Activated CD8-positive, alpha-beta T cell treated with anti-CD3 and anti-CD28 coated beads for 36 hours (primary cell): ENCODE measurements at regions of chr7 and their contacts with region 1.

Region 1: DNA sequence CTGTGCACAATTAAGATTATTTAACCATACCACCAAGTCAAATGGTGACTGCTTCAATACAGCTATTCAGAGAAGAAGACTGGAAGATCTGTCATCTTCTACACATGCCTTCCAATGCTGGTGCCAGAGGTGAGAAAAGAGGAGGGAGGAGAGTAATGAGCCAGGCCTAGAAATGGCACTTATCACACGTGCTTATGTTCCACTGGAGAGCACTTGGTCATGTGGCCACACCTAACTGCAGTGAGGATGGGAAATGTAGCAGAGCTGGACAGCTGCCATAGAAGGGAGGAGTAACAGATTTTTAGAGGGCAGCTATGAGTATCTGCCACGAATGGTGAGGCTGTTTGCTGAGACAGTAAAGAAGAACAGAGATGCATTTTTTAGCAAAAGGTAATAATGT is 77.1 kb downstream of the MPLKIP start:
- DNase-seq: no peak
- ATAC-seq: peak; percentile 27
- H3K4me3 Mint-ChIP-seq: no peak overlapping the region
- H3K27ac Mint-ChIP-seq: no peak overlapping the region
- H3K4me1 Mint-ChIP-seq: peaks cover 6% of the 10 kb centered on the region
- H3K27me3 Mint-ChIP-seq: no peaks in the 10 kb centered on the region
- CTCF ChIP-seq: no peak

Region 2: GRCh38 chr7:39894904-39895303 is 162.4 kb before region 1 on chr7:
- CTCF ChIA-PET with region 1: interaction called, 142 read pairs
- POLR2A ChIA-PET with region 1: no interaction called
- intact Hi-C with region 1: loop called (anchors 2 kb)
- DNase-seq: no peak
- ATAC-seq: no peak
- H3K4me3 Mint-ChIP-seq: no peak overlapping the region
- H3K27ac Mint-ChIP-seq: no peak overlapping the region
- H3K4me1 Mint-ChIP-seq: no peaks in the 10 kb centered on the region
- H3K27me3 Mint-ChIP-seq: no peaks in the 10 kb centered on the region
- CTCF ChIP-seq: no peak

Region 3: DNA sequence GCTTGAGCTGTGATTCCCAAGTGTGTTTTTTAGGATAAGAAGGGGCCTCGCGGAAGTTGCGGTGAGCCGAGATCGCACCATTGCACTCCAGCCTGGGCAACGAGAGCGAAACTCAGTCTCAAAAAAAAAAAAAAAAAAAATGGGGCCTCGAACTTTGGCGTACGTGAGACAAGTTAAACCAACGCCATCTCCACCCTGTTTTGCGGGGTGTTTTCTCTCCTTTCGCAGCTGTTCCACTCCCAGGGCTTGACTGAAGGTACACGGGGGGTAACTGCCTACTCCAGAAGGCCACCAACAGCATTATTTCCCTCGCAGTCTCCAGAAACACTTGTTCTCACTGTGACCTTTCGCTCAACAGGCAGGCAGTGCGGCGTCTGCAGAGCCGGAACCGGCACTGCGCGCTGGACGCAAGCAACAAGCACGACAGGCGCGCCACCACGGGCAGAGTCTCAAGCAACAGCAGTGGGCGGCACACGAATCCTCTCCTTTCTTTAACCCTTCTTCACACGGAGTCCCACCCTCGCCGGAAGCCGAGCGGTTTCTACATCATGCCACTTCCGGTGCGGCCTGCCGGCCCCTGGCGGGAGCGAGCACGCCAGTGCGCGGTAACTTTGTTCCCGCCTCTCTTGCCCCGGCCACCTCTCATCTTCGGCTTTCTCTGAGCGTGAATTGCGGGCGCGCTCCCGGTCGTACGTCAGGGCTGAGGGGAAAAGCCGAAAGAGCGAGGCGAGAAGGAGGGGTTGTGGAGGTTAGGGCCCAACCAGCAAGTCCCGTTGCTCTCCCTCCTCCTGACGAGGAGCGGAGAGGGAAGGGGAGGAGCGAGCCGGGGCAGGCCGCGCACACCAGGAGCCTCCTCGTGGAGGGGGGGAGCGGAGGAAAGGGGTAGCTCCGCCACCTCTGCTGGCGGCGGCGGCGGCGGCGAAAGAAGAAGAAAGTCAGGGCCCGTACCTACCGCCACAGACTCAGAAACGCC is 108.0 kb before region 1 on chr7:
- CTCF ChIA-PET with region 1: interaction called, 36 read pairs
- POLR2A ChIA-PET with region 1: interaction called, 3 read pairs
- intact Hi-C with region 1: loop called (anchors 1 kb)
- DNase-seq: peak; percentile 98
- ATAC-seq: peak; percentile 79
- H3K4me3 Mint-ChIP-seq: peak overlapping the region; percentile 90
- H3K27ac Mint-ChIP-seq: peak overlapping the region; percentile 99
- H3K4me1 Mint-ChIP-seq: peaks cover 20% of the 10 kb centered on the region
- H3K27me3 Mint-ChIP-seq: no peaks in the 10 kb centered on the region
- CTCF ChIP-seq: no peak

Region 4: DNA sequence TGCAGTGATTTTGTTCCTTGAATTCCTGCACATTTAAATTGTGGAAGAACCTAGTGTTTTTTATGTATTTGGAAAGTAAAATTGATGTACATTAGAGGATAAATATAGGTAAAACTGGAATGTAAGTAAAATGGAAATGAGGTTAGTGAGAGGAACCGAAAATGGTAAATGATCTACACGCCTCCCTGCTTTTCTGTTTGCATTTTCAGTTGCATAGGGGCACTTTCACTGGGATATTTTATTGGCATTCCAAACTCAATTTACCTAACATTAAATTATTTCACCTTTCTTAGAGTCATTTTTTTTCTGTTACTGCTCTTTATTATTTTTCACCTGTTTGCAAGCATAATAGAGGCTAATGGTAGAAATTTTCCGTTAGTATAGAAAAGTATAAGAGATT is 99.3 kb before region 1 on chr7:
- CTCF ChIA-PET with region 1: interaction called, 36 read pairs
- POLR2A ChIA-PET with region 1: no interaction called
- intact Hi-C with region 1: no loop called
- DNase-seq: no peak
- ATAC-seq: no peak
- H3K4me3 Mint-ChIP-seq: no peak overlapping the region
- H3K27ac Mint-ChIP-seq: no peak overlapping the region
- H3K4me1 Mint-ChIP-seq: peaks cover 73% of the 10 kb centered on the region
- H3K27me3 Mint-ChIP-seq: no peaks in the 10 kb centered on the region
- CTCF ChIP-seq: no peak

Region 5: DNA sequence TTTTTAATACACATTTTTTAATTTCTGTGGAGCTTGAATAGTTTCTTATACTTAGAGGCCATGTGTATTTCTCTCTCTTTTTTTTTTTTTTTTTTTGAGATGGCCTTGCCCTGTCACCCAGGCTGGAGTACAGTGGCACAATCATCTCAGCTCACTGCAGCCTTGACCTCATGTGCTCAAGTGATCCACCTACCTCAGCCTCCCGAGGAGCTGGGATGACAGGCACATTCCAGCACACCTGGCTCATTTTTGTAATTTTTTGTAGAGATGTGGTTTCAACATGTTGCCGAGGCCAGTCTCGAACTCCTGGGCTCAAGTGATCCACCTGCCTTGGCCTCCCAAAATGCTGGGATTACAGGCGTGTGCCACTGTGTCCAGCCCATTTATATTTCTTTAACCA is 42.9 kb before region 1 on chr7:
- CTCF ChIA-PET with region 1: no interaction called
- POLR2A ChIA-PET with region 1: no interaction called
- intact Hi-C with region 1: no loop called
- DNase-seq: no peak
- ATAC-seq: no peak
- H3K4me3 Mint-ChIP-seq: no peak overlapping the region
- H3K27ac Mint-ChIP-seq: no peak overlapping the region
- H3K4me1 Mint-ChIP-seq: peaks cover 26% of the 10 kb centered on the region
- H3K27me3 Mint-ChIP-seq: no peaks in the 10 kb centered on the region
- CTCF ChIP-seq: no peak

Region 6: DNA sequence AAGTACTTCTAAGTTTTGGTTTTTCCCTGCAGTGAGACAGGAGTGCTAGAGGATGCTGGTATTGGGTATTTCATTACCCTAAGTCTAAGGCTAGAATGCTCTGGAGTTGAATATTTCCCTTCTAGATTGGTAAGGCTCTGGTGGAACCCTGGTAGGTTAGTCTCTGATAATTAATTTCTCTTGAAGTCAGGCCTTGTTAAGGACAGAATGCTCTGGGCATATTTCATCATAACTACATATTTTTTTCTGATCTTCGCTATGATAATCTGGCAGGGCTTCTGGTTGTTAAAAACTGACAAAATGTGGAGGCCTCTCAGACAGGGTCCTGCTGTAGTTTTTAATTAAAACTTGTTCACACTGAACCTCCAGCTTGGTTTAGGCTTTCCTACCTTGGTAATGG is 23.5 kb before region 1 on chr7:
- CTCF ChIA-PET with region 1: interaction called, 22 read pairs
- POLR2A ChIA-PET with region 1: no interaction called
- intact Hi-C with region 1: no loop called
- DNase-seq: no peak
- ATAC-seq: no peak
- H3K4me3 Mint-ChIP-seq: no peak overlapping the region
- H3K27ac Mint-ChIP-seq: peak overlapping the region; percentile 40
- H3K4me1 Mint-ChIP-seq: peaks cover 23% of the 10 kb centered on the region
- H3K27me3 Mint-ChIP-seq: no peaks in the 10 kb centered on the region
- CTCF ChIP-seq: no peak

Region 7: GRCh38 chr7:40041456-40041855 is 15.8 kb before region 1 on chr7:
- CTCF ChIA-PET with region 1: interaction called, 22 read pairs
- POLR2A ChIA-PET with region 1: no interaction called
- intact Hi-C with region 1: no loop called
- DNase-seq: no peak
- ATAC-seq: no peak
- H3K4me3 Mint-ChIP-seq: no peak overlapping the region
- H3K27ac Mint-ChIP-seq: no peak overlapping the region
- H3K4me1 Mint-ChIP-seq: peaks cover 8% of the 10 kb centered on the region
- H3K27me3 Mint-ChIP-seq: no peaks in the 10 kb centered on the region
- CTCF ChIP-seq: no peak